Posterior cingulate gyrus (tissue), 11 donors: ENCODE measurements at regions of chr4 and their contacts with region 1.

Region 1: GRCh38 chr4:186021461-186022167 is 47.3 kb upstream of the TLR3 start:
- DNase-seq: peak; percentile 21 to 90 (median 45)

Region 2: DNA sequence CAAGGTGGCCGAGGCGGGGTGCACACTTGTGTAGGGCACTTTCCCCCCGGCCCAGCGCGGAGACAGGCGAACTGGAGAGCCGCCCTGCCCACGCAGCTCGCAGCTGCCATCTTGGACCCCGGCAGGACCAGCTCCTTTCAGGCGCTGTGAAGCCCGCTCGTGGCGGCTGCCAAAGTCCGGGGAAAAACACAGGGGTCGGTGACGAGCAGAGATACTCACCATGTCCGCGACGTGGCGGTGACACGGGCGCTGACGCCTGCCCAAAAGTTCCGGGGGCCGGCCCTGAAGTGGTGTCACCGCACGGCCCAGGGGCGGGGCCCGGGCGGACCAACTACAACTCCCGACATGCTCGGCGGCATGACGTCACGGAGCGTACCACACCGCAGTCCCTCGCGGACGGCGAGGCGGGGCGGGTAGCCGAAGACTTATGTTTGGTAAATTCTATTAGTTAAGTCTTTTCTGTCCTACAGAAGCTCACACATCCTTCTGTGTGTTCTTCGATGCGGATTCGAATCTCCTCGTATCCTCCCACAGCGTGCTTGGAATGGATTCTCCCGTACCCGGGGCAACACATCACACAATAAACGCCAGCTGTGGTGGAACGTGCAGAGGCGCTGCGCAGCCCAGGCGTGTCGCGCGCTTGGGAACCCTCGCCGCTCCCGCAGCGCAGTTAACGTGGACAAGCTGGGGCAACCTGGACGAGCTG is 595.8 kb before region 1 on chr4 and contains the start of gene UFSP2:
- intact Hi-C with region 1: loop called (anchors 10 kb)
- DNase-seq: peak; percentile 79 to 98 (median 88)

Region 3: DNA sequence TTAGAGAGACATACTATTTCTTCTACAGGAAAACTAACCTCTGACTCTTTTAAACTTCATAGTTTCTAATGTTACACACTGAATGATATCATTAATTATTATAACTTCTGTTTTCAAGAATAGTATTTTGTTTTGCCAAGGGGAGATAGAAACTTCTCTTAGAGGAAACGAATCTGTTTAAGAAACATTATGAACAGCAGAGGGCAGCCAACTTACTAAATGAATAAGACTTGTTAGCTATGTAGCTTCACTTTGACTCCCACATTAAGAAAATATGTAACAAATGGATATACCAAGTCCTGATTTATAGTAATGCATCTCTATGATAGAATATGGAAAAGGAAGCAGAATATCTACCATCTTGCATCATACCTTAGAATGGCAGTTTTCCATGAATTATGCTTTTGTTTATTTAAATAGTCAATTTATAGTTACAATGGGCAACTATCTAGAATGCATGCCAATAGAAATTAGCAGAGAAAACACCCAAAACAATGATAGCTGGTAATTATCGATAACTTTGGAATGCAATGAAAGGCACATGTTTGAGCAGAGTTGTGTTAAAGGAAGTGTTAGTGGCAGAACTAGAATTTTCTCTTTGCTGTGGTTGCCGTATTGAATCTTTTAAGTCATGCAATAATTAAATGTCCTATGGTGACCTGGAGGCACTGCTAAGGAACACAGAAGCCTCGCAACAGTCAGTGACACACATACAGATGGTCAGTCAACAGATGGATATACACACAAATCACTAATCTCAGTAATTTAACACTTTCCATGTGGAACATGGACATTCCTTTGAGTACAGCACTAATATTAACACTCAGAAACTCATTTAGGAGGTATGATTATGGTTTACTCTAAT is 380.6 kb before region 1 on chr4:
- intact Hi-C with region 1: loop called (anchors 2 kb)
- DNase-seq: no peak

Region 4: DNA sequence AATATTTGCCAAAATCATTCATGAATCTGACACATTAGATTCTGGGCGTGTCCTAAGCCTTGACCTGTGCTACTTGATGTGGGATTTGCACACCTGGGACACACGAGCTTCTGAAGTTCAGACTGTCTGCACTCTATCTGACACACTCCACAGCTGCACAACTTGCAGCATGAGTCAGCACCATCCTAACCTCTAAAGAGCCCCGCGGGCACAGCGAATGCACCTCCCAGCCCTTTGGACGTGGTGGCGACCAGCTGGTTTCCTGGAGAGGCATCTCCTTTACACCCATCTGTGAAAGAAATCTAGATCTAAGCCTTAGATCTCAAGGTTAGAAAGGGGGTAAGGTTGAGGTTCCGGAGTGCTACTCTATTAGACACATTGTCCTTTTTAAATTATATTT is 278.8 kb before region 1 on chr4:
- intact Hi-C with region 1: loop called (anchors 10 kb)
- DNase-seq: no peak